ENCODE measurements at regions of chr20 and their contacts with region 1.

Region 1: DNA sequence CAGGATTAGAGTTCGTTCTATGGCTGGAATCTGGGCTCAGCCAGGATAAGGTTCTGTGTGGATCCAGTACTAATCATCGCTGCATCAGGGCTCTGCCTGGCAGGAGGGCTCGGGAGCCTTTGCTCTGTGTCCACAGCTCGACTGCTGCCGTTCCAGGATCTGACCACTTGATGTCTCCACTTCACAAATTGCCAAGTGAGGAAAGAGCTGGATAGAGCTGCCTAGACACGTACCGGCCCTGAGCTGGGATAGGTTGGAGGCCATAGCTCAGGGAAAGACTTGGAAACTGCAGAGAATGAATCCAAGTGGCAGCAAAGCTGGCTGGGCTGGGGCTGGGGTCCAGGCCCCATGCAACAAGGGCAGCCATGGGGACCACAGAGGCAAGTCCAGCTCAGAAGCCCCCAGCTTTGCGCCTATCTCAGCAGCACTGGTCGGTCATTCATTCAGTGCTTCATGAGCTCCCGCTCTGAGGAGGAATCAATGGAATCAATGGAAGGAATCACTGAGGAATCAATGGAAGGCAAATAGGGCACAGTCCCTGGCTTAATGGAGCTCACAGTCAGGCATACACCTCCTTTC is 38.0 kb upstream of the TOP1 start:
- DNase-seq: peak; percentile 75
- ATAC-seq: peak; percentile 100
- H3K4me3 ChIP-seq: peak overlapping the region in 1 of 2 experiments; percentile 13; a peak in 1 of 4 replicates
- H3K27ac ChIP-seq: peak overlapping the region; percentile 55
- H3K4me1 ChIP-seq: peaks cover 11 to 25% of the 10 kb centered on the region in 2 experiments
- H3K27me3 ChIP-seq: no peaks in the 10 kb centered on the region
- CTCF ChIP-seq: peak; percentile 73 to 88 (median 85)
- POLR2A ChIP-seq: no peak
- RAD21 ChIP-seq: peak; percentile 94

Region 2: DNA sequence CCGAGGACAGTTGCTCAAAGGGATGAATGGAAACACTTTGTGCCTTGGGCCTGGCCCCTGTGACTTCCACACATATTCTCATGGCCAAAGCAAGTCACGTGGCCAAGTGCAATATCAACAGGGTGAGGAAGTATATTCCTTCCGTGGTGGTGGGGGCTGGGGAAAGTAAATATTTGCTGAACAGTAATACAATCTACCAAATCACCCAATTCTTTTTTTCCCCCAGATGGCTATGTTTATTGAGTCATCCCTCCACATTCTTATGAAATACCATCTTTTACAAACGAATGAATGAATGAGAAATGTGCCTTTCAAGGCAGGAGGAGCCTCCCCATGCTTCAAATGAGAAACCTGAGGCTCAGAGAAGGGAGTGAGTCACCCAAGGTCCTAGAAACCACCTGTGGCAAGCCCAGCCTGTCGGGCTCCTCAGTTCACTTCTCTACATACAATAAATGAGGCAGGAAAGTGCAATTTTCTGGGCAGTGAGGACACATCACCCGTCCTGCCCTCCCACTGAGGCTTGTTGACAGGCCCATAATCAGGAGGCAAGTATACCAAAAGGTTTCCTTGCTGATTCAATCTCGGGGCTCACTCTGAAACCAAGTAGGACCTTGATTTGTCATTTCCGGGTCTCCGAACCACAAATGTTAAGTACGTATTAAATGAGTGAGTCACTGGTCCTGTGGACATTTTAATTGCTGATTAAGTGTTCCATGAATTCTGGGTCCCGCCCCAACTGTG is 12.7 kb after region 1 on chr20:
- CTCF ChIA-PET with region 1: interaction called, 13 read pairs
- POLR2A ChIA-PET with region 1: interaction called, 16 read pairs
- RAD21 ChIA-PET with region 1: interaction called, 3 to 5 read pairs
- intact Hi-C with region 1: no loop called
- DNase-seq: peak; percentile 98
- ATAC-seq: peak; percentile 84
- H3K4me3 ChIP-seq: peak overlapping the region; percentile 25 to 49
- H3K27ac ChIP-seq: peak overlapping the region; percentile 100
- H3K4me1 ChIP-seq: peaks cover 64 to 76% of the 10 kb centered on the region in 2 experiments
- H3K27me3 ChIP-seq: no peaks in the 10 kb centered on the region
- CTCF ChIP-seq: no peak
- POLR2A ChIP-seq: peak; percentile 57
- RAD21 ChIP-seq: no peak

Region 3: DNA sequence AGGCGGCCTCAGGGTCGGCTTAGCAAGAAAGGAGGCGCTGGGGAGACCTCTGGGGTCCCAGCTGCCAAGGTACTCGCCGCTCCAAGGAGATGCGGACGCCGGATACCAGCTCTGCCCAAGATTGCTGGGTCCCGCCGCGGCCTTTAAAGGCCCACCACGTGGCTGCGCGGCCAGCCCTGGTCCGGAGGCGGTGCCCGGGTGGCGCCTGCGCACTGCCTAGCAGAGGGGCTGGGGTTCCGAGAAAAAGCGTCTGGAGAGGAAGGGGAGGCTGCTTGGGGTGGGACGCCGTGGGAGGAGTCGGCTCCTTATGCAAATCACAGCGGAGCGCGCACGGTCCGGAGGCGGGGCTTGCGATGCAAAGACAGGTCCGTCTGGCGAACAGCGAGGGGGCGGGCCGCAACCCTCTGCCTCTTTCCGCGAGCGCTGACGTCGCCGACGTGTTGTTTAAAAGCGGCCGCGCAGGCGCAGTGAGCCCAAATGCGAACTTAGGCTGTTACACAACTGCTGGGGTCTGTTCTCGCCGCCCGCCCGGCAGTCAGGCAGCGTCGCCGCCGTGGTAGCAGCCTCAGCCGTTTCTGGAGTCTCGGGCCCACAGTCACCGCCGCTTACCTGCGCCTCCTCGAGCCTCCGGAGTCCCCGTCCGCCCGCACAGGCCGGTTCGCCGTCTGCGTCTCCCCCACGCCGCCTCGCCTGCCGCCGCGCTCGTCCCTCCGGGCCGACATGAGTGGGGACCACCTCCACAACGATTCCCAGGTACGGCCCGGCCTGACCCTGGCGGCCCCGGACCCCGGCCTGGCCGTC is 37.9 kb after region 1 on chr20 and contains the start of gene TOP1:
- CTCF ChIA-PET with region 1: interaction called, 4 read pairs
- POLR2A ChIA-PET with region 1: interaction called, 12 read pairs
- RAD21 ChIA-PET with region 1: interaction called in 1 of 2 experiments, 6 read pairs
- intact Hi-C with region 1: loop called (anchors 1 kb)
- DNase-seq: peak; percentile 99
- ATAC-seq: peak; percentile 97
- H3K4me3 ChIP-seq: peak within 1 kb of the TSS; percentile 79 to 86
- H3K27ac ChIP-seq: peak within 1 kb of the TSS; percentile 88
- H3K4me1 ChIP-seq: peaks cover 28 to 43% of the 10 kb centered on the region in 2 experiments
- H3K27me3 ChIP-seq: no peaks in the 10 kb centered on the region
- CTCF ChIP-seq: no peak
- POLR2A ChIP-seq: peak; percentile 83
- RAD21 ChIP-seq: no peak
- total RNA-seq, gene TOP1: 190 TPM

Region 4: GRCh38 chr20:41047975-41048305 is 57.3 kb after region 1 on chr20:
- CTCF ChIA-PET with region 1: interaction called, 7 read pairs
- POLR2A ChIA-PET with region 1: interaction called, 5 read pairs
- RAD21 ChIA-PET with region 1: no interaction called
- intact Hi-C with region 1: loop called (anchors 5 kb)
- DNase-seq: no peak
- ATAC-seq: peak; percentile 62
- H3K4me3 ChIP-seq: no peak overlapping the region
- H3K27ac ChIP-seq: peak overlapping the region; percentile 20; the same call in 1 of the 2 replicates
- H3K4me1 ChIP-seq: peaks cover 28 to 76% of the 10 kb centered on the region in 2 experiments
- H3K27me3 ChIP-seq: no peaks in the 10 kb centered on the region
- CTCF ChIP-seq: no peak
- POLR2A ChIP-seq: no peak
- RAD21 ChIP-seq: no peak

Region 5: DNA sequence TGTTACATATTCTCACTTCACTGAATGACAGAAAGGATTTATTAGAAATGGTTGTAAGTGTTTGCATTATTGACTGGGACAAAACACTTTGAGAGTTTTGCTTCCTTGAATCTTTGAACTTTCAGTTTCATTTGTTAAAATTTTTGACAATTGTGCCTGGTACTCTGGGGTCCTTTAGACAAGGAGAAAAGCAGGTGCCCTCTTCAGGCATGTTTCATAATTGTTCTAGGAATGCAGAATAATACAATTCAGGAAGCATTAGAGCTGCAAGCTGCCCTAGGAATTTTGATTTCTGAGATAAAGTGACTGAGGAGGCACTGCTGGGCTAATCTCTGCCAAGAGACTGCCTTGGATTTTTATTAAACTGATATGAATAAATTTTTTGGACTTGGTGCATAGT is 87.7 kb after region 1 on chr20:
- CTCF ChIA-PET with region 1: interaction called, 17 read pairs
- POLR2A ChIA-PET with region 1: interaction called, 3 read pairs
- RAD21 ChIA-PET with region 1: interaction called, 4 to 5 read pairs
- intact Hi-C with region 1: loop called (anchors 1 kb)
- DNase-seq: no peak
- ATAC-seq: peak; percentile 68
- H3K4me3 ChIP-seq: no peak overlapping the region
- H3K27ac ChIP-seq: no peak overlapping the region
- H3K4me1 ChIP-seq: peaks cover 0 to 7% of the 10 kb centered on the region in 2 experiments; a peak in 1 of 4 replicates
- H3K27me3 ChIP-seq: no peaks in the 10 kb centered on the region
- CTCF ChIP-seq: peak; percentile 43 to 58 (median 52); a peak in 5 of 6 replicates
- POLR2A ChIP-seq: no peak
- RAD21 ChIP-seq: peak; percentile 63

Region 6: GRCh38 chr20:41095110-41095969 is 104.7 kb after region 1 on chr20:
- CTCF ChIA-PET with region 1: interaction called, 59 read pairs
- POLR2A ChIA-PET with region 1: interaction called, 3 read pairs
- RAD21 ChIA-PET with region 1: interaction called, 3 to 8 read pairs
- intact Hi-C with region 1: loop called (anchors 1 kb)
- DNase-seq: peak; percentile 18
- ATAC-seq: peak; percentile 82
- H3K4me3 ChIP-seq: no peak overlapping the region
- H3K27ac ChIP-seq: no peak overlapping the region; the same call in 1 of the 2 replicates
- H3K4me1 ChIP-seq: no peaks in the 10 kb centered on the region
- H3K27me3 ChIP-seq: no peaks in the 10 kb centered on the region
- CTCF ChIP-seq: peak; percentile 73 to 91 (median 85)
- POLR2A ChIP-seq: no peak
- RAD21 ChIP-seq: peak; percentile 78

Region 7: GRCh38 chr20:41136680-41137613 is 146.3 kb after region 1 on chr20 and contains the start of gene PLCG1:
- CTCF ChIA-PET with region 1: interaction called, 15 read pairs
- POLR2A ChIA-PET with region 1: no interaction called
- RAD21 ChIA-PET with region 1: interaction called in 1 of 2 experiments, 6 read pairs
- intact Hi-C with region 1: no loop called
- DNase-seq: peak; percentile 35
- ATAC-seq: peak; percentile 84
- H3K4me3 ChIP-seq: peak within 1 kb of the TSS; percentile 57 to 79
- H3K27ac ChIP-seq: peak within 1 kb of the TSS; percentile 85
- H3K4me1 ChIP-seq: peaks cover 9 to 20% of the 10 kb centered on the region in 2 experiments; a peak in 3 of 4 replicates
- H3K27me3 ChIP-seq: no peaks in the 10 kb centered on the region
- CTCF ChIP-seq: no peak
- POLR2A ChIP-seq: peak; percentile 21
- RAD21 ChIP-seq: no peak
- total RNA-seq, gene PLCG1: 45.6 TPM

Region 8: DNA sequence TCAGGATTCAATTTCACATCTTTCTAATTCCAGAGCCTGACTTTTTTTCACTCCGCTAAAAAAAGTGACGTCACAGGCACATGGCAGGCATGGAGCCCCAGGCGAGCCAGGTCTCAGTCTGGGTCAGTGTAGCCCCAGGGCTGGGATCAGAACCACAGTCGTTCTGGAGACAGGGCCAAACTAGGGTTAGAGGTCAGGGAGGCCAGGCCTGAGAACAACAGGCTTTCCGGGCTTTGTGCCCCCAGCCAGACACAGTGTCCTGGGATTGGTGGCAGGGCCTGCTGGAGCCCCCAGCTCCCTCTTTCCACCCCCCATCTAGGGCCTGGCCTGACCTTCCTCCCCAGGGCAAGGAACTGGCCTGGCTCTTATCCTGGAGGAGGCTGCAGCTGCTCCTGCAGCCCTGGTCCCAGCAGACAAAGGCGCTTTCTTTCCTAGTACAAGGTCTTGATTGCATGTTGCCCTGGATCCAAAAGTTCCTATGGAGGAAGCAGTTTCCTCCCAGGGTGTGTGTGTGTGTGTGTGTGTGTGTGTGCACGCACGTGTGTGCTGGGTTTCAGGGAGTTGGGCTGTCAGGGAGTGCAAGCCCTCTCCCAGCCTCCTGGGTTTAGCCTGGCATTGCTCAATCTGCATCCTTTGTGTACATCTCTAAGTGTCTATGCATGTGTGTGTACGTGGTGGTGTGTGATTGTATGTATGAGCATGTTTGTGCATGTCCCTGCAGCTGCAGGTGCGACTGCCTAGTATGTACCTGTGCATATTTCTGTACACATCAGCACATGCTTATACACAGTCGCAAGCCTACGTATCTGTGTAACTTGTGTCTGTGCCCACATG is 402.5 kb after region 1 on chr20:
- CTCF ChIA-PET with region 1: no interaction called
- POLR2A ChIA-PET with region 1: no interaction called
- RAD21 ChIA-PET with region 1: no interaction called
- intact Hi-C with region 1: no loop called
- DNase-seq: no peak
- ATAC-seq: no peak
- H3K4me3 ChIP-seq: no peak overlapping the region
- H3K27ac ChIP-seq: no peak overlapping the region
- H3K4me1 ChIP-seq: no peaks in the 10 kb centered on the region
- H3K27me3 ChIP-seq: no peaks in the 10 kb centered on the region
- CTCF ChIP-seq: no peak
- POLR2A ChIP-seq: no peak
- RAD21 ChIP-seq: no peak